CD4-positive, alpha-beta memory T cell (primary cell): ENCODE measurements at regions of chr19 and their contacts with region 1.

Region 1: DNA sequence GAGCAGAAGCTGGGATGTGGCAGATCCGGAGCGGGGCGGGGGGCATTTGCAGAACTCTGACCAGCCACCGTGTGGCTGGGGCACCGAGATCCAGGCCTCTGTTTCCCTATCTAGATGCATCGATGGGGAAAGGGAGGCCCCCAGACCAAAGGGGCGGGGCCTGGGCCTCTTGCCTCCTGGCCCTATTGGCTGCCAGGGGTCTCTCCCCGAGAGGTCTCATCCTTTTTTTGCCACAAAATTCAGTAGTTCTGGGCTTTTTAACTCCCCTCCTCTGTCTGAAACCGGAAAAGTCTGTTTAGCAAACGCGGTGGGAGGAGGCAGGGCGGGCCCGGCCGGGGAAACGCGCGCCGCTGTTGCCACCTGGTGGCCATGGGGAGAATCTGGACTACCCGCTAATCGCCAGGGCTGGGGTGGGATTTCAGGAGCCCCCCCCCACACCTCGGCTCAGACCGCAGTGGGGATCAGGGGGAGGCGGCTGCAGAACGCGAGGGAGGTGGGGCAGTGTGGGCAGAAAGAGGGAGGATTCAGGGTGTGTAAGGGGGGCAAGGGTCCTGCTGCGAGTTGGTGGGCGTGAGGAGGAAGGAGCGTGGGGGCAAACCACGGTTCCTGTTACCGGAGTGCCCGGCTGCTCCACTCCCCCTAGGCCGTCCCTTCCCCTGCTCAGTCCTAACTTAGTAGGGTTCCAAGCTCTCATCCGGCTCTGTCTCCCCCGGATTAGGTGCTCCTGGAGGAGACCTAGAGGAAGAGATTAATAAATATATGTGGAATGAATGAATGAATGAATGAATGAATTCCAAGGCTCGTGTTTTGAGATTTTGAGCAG is 28.3 kb downstream of the IL12RB1 start:
- DNase-seq: peak; percentile 75 to 85 (median 82)
- H3K4me3 ChIP-seq: no peak overlapping the region
- H3K4me3 Mint-ChIP-seq: peak overlapping the region in 5 of 8 donors; percentile 22 to 64 (median 39)
- H3K27ac ChIP-seq: peak overlapping the region; percentile 44
- H3K27ac Mint-ChIP-seq: peak overlapping the region; percentile 66 to 96 (median 88)
- H3K4me1 ChIP-seq: peaks cover 11% of the 10 kb centered on the region
- H3K4me1 Mint-ChIP-seq: peaks cover 9 to 15% (median 12%) of the 10 kb centered on the region in 4 donors
- H3K27me3 ChIP-seq: no peaks in the 10 kb centered on the region
- H3K27me3 Mint-ChIP-seq: no peaks in the 10 kb centered on the region

Region 2: DNA sequence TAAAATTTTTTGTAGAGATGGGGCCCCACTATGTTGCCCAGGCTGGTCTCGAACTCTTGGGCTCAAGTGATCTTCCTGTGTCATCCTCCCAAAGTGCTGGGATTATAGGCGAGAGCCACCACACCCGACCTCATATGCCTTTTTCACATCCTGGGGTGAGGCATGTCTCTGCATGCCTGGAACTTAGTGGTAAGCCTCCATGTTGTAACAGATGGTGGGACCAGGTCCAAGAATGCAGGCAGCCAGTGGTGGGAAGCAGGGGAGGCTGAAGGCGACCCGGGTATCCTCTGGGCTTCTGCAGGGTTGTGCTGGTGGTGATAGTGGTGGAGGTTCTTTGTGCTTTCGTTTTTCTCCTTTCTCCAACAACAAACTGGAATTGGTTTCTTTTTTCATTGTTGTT is 155.7 kb before region 1 on chr19:
- CTCF ChIA-PET with region 1: no interaction called
- POLR2A ChIA-PET with region 1: no interaction called
- intact Hi-C with region 1: no loop called
- DNase-seq: no peak
- H3K4me3 ChIP-seq: no peak overlapping the region
- H3K4me3 Mint-ChIP-seq: no peak overlapping the region
- H3K27ac ChIP-seq: no peak overlapping the region
- H3K27ac Mint-ChIP-seq: no peak overlapping the region
- H3K4me1 ChIP-seq: no peaks in the 10 kb centered on the region
- H3K4me1 Mint-ChIP-seq: no peaks in the 10 kb centered on the region
- H3K27me3 ChIP-seq: no peaks in the 10 kb centered on the region
- H3K27me3 Mint-ChIP-seq: peaks cover 15 to 16% of the 10 kb centered on the region in 2 donors

Region 3: GRCh38 chr19:17938092-17938845 is 120.2 kb before region 1 on chr19:
- CTCF ChIA-PET with region 1: interaction called, 22 read pairs
- POLR2A ChIA-PET with region 1: no interaction called
- intact Hi-C with region 1: loop called (anchors 1 kb)
- DNase-seq: peak; percentile 77 to 82 (median 80)
- H3K4me3 ChIP-seq: no peak overlapping the region
- H3K4me3 Mint-ChIP-seq: no peak overlapping the region
- H3K27ac ChIP-seq: no peak overlapping the region
- H3K27ac Mint-ChIP-seq: peak overlapping the region in 1 of 7 donors; percentile 52
- H3K4me1 ChIP-seq: peaks cover 7% of the 10 kb centered on the region
- H3K4me1 Mint-ChIP-seq: peaks cover 4 to 10% (median 7%) of the 10 kb centered on the region in 4 donors
- H3K27me3 ChIP-seq: no peaks in the 10 kb centered on the region
- H3K27me3 Mint-ChIP-seq: no peaks in the 10 kb centered on the region

Region 4: DNA sequence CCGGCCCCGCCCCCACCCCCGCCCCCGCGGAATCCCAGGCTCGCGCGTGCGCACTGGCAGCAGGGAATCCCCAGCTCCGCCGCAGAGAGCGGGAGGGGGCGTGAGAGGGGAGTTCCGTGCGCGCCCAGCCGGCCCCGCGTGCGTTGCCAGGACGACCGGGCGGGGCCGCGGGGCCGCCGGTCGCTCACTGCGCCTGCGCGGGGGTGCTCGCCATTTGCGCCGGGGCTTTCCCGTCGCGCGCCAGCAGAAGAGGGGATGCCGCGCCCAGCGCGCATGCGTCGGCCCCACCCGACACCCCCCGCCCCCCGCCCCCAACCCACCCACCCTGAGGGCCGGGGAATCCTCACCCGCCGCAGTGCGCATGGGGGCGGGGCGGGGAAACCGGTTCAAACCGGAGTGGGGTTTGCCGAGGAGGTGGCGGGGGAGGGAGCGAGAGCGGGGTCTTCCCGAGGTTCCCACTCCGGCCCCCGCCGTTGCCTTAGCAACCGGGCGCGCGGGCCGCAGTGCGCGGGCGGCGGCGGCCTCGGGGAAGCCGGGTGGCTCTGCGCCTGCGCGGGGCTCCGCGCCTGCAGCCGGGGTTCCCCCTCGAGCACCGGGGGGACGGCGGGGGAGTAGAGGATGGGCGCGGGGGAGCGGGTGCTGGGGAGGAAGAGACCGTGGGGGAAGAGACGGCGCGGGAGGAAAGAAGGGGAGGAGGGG is 110.5 kb before region 1 on chr19:
- CTCF ChIA-PET with region 1: interaction called, 8 read pairs
- POLR2A ChIA-PET with region 1: interaction called, 3 read pairs
- intact Hi-C with region 1: loop called (anchors 1 kb)
- DNase-seq: peak; percentile 94 to 97 (median 96)
- H3K4me3 ChIP-seq: peak overlapping the region in 1 of 2 donors; percentile 43
- H3K4me3 Mint-ChIP-seq: peak overlapping the region; percentile 54 to 90 (median 80)
- H3K27ac ChIP-seq: peak overlapping the region; percentile 100
- H3K27ac Mint-ChIP-seq: peak overlapping the region; percentile 64 to 99 (median 84)
- H3K4me1 ChIP-seq: peaks cover 52% of the 10 kb centered on the region
- H3K4me1 Mint-ChIP-seq: peaks cover 25 to 62% (median 41%) of the 10 kb centered on the region in 4 donors
- H3K27me3 ChIP-seq: peaks cover 25% of the 10 kb centered on the region
- H3K27me3 Mint-ChIP-seq: peaks cover 21 to 27% of the 10 kb centered on the region in 2 donors

Region 5: DNA sequence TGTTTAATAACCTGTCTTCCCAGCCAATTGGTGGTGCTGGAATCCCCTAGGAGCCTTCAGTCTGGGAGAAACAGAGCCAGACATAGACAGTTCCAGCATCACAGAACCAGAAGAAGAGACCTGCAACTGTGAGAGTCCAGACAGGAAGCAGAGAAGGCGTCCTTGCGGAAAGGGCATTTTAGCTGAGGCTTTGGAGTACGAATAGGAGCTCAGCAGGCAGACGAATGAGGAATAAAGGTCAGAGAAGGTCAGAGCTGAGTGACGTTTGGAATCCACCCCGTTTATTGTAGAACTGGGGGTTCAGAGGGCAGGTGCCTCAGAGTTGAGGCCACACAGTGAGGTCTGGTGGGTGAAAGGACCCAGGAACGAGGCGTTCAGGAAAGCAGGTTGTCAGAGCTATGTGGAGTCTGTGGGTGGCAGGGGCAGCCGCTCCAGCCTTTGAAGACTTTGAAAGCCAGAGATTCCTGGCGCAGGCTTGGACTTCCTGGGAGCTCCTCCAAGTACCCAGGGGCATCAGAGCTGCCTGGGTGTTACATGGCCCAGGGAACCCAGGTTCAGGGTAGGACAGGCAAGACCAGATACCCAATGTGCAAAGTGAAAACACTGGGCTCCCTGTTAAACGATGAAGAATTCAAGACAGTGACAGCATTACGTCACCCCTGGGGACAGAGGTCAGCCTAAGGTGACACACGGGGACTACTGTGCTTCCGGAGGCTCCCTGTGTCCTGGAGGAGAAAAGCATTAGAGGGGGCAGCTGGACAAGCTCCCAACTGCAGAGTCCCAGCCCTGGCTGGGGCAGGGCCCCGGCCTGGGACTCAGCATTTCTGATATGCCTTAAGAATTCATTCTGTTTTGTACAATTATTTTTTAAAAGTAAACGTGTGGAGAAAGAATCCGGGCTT is 45.0 kb before region 1 on chr19:
- CTCF ChIA-PET with region 1: interaction called, 148 read pairs
- POLR2A ChIA-PET with region 1: interaction called, 140 read pairs
- intact Hi-C with region 1: no loop called
- DNase-seq: no peak
- H3K4me3 ChIP-seq: no peak overlapping the region
- H3K4me3 Mint-ChIP-seq: peak overlapping the region in 7 of 8 donors; percentile 23 to 88 (median 81)
- H3K27ac ChIP-seq: peak overlapping the region; percentile 42
- H3K27ac Mint-ChIP-seq: peak overlapping the region; percentile 94 to 99 (median 97)
- H3K4me1 ChIP-seq: peaks cover 77% of the 10 kb centered on the region
- H3K4me1 Mint-ChIP-seq: peaks cover 31 to 68% (median 53%) of the 10 kb centered on the region in 4 donors
- H3K27me3 ChIP-seq: no peaks in the 10 kb centered on the region
- H3K27me3 Mint-ChIP-seq: no peaks in the 10 kb centered on the region

Region 6: DNA sequence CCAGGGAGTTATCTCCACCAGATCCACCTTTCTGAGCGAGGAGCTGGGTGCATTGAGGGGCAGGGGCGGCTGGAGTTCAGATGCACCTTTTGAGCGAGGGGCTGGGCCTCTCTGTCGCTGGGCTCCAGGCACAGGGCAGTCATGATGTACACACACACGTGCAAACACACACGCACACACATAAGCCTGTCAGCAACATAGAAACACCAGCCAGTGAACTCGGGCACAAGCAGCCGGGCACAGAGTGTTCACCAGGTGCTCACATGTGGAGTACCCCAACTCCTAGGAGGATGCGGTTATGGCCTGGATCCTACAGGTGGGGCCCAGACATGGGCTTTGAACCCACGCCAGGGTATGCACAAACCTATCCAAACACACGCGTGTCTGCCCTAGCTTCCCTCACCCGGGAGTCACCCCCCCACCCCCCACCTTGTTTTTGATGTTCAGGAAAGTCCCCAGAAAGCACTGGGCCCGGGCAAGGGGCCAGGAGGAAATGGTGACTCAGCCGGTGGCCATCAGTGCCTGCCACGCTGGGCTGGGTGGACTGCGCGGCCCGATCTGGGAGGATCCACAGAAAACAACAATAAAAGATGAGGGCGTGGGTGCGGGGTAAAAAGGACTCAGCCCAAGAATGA is 37.2 kb before region 1 on chr19:
- CTCF ChIA-PET with region 1: interaction called, 5 read pairs
- POLR2A ChIA-PET with region 1: interaction called, 23 read pairs
- intact Hi-C with region 1: no loop called
- DNase-seq: peak; percentile 57 to 91 (median 64)
- H3K4me3 ChIP-seq: no peak overlapping the region
- H3K4me3 Mint-ChIP-seq: peak overlapping the region; percentile 45 to 85 (median 68)
- H3K27ac ChIP-seq: peak overlapping the region; percentile 66
- H3K27ac Mint-ChIP-seq: peak overlapping the region; percentile 91 to 99 (median 96)
- H3K4me1 ChIP-seq: peaks cover 61% of the 10 kb centered on the region
- H3K4me1 Mint-ChIP-seq: peaks cover 41 to 76% (median 60%) of the 10 kb centered on the region in 4 donors
- H3K27me3 ChIP-seq: no peaks in the 10 kb centered on the region
- H3K27me3 Mint-ChIP-seq: no peaks in the 10 kb centered on the region

Region 7: DNA sequence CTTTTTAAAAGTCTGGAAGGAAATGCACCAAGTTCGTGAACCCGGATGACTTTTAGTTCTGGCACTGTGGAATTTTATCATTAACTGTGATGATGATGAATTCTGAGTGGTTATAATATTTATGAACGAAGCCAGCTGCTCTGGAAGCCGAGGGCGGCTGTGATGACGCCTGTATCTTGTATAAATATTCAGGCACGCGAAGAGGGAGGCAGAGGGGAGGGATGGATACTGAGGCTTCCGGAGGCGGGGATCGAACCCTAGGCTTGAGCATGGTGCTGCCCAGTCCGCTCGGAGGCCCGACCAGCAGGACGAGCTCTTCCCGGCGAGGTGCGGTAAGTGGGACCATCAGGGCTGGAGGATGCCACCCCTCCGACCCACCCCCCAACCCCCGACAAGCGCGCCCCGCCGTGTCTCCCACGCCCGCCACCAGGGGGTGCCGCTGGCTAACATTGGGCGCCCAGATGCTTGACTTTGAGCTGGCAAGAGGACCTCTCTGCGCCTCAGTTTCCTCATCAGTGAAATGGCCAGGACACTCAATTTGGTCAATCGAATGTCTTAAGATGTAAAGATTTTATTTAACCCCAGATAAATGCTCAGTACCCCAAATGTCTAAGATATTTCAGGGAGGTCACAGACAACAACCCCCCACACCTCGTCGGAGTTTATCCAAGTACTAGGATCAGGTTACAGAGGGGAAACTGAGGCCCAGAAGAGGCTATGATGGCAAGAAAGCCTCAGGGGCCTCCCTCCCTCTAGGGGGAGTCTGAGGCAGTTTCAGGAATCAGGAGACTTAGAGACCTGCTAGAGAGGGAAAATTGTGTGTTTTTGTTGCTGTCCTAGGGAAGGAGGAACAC is 149.9 kb after region 1 on chr19:
- CTCF ChIA-PET with region 1: no interaction called
- POLR2A ChIA-PET with region 1: no interaction called
- intact Hi-C with region 1: no loop called
- DNase-seq: peak in 4 of 5 donors; percentile 34 to 53 (median 40)
- H3K4me3 ChIP-seq: no peak overlapping the region
- H3K4me3 Mint-ChIP-seq: no peak overlapping the region
- H3K27ac ChIP-seq: no peak overlapping the region
- H3K27ac Mint-ChIP-seq: peak overlapping the region in 2 of 7 donors; percentile 46 to 65
- H3K4me1 ChIP-seq: peaks cover 13% of the 10 kb centered on the region
- H3K4me1 Mint-ChIP-seq: peaks cover 4 to 20% (median 8%) of the 10 kb centered on the region in 4 donors
- H3K27me3 ChIP-seq: no peaks in the 10 kb centered on the region
- H3K27me3 Mint-ChIP-seq: peaks cover 4 to 6% of the 10 kb centered on the region in 2 donors